Dorsolateral prefrontal cortex (tissue), 120 donors: ENCODE measurements at regions of chr10 and their contacts with region 1.

Region 1: GRCh38 chr10:784403-785088 is 95.1 kb upstream of the DIP2C start:
- DNase-seq: peak; percentile 56 to 93 (median 80)
- H3K4me3 ChIP-seq: peak overlapping the region; percentile 26 to 75 (median 55)
- H3K27ac ChIP-seq: peak overlapping the region in 32 of 59 donors; percentile 2 to 80 (median 44)
- H3K27me3 ChIP-seq: peaks cover 0 to 5% (median 0%) of the 10 kb centered on the region in 45 donors
- CTCF ChIP-seq: peak in 25 of 56 donors; percentile 5 to 52 (median 20)

Region 2: DNA sequence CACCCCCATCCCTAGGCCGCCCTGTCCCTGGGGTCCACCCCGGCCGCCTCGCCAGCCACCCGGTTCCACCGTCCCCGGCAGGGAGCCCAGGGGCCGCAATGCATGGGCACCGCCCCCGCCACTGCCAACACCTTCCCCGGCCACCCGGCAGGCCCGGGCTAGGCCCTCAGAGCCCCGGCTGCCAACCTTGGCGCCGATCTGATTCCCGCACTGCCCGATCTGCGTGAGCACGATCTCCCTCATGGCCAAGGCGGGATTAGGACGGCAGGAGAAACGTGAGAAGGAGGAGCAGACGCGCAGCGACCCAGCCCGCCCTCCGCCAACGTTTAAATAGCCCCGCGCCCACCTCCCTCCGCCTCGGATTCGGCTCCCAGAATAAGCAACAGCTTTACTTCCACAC is 735.5 kb before region 1 on chr10 and contains the start of gene TUBB8:
- intact Hi-C with region 1: no loop called
- DNase-seq: no peak
- H3K4me3 ChIP-seq: no peak within 1 kb of the TSS
- H3K27ac ChIP-seq: no peak within 1 kb of the TSS
- H3K27me3 ChIP-seq: no peaks in the 10 kb centered on the region
- CTCF ChIP-seq: no peak
- total RNA-seq, gene TUBB8: 0.19 to 2.5 (median 0.59) TPM in 53 of 120 experiments, not detected in the others

Region 3: GRCh38 chr10:397321-398075 is 387.0 kb before region 1 on chr10:
- intact Hi-C with region 1: loop called in 1 of 2 experiments (anchors 10 kb)
- DNase-seq: no peak
- H3K4me3 ChIP-seq: no peak overlapping the region
- H3K27ac ChIP-seq: peak overlapping the region in 3 of 59 donors; percentile 4 to 13 (median 13)
- H3K27me3 ChIP-seq: no peaks in the 10 kb centered on the region
- CTCF ChIP-seq: no peak

Region 4: DNA sequence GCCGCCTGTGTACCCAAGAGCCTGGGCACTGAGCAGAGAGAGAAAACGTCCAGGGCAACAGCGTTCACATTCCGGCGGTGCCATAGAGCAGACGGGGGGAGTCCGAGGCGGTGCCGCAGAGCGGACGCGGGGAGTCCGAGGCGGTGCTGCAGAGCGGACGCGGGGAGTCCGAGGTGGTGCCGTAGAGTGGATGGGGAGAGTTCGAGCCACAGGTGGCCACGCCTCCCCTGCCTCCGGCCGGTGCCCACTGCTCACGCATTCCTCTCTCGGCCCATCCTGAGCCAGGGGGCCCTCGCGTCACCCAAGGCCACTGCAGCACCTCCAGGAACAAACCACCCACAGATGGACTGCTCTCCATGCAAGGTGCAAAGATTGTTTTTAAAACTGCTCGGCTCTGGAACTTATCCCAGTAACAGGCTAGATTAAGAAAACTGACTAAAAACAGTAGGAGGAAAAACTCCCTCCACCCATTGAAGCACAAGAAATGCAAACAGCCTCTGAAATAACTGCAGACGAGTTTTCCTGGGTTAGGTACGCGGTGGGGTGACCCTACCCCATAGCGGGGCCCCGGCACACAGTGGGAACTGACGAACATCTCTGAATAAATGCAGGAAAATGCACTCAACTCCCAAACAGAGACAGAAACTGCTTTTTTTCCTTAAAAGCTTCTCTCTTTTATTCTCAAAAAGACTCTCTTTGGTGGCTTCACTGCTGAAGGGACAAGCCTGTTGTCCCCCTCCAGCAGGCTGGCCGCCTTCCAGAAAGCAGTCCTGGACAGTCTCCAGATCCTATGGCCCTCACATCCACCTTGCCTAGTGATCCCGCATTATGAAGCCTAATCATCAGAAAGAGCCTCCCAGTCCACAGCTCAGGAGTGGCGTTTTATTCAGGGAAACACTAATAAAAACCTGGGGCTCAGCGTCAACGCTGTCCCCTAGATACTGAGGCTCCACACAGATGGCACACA is 151.0 kb before region 1 on chr10:
- intact Hi-C with region 1: loop called in 1 of 2 experiments (anchors 10 kb)
- DNase-seq: peak in 3 of 10 donors; percentile 40 to 59 (median 55)
- H3K4me3 ChIP-seq: peak overlapping the region in 50 of 59 donors; percentile 1 to 50 (median 26)
- H3K27ac ChIP-seq: peak overlapping the region; percentile 15 to 90 (median 81)
- H3K27me3 ChIP-seq: no peaks in the 10 kb centered on the region
- CTCF ChIP-seq: no peak

Region 5: GRCh38 chr10:1347962-1348772 is 563.6 kb after region 1 on chr10:
- intact Hi-C with region 1: no loop called
- DNase-seq: no peak
- H3K4me3 ChIP-seq: no peak overlapping the region
- H3K27ac ChIP-seq: peak overlapping the region in 1 of 59 donors; percentile 46
- H3K27me3 ChIP-seq: peaks cover 0 to 3% (median 0%) of the 10 kb centered on the region in 45 donors
- CTCF ChIP-seq: no peak